ENCODE measurements at regions of chr9 and their contacts with region 1.

Region 1: GRCh38 chr9:111631071-111631971 is at the start of gene DNAJC25:
- DNase-seq: peak; percentile 96 to 99
- H3K4me3 ChIP-seq: peak within 1 kb of the TSS; percentile 81 to 92 (median 90)
- H3K27ac ChIP-seq: peak within 1 kb of the TSS; percentile 49; the same call in 1 of the 2 replicates
- H3K4me1 ChIP-seq: peaks cover 0 to 3% (median 0%) of the 10 kb centered on the region in 4 experiments; a peak in 3 of 7 replicates
- H3K27me3 ChIP-seq: no peaks in the 10 kb centered on the region
- CTCF ChIP-seq: 0 out of 4 replicates have a peak, but pooled peaks of 1 of the 3 experiments have one; percentile 1
- EP300 ChIP-seq: no peak
- POLR2A ChIP-seq: peak; percentile 100
- RAD21 ChIP-seq: no peak
- total RNA-seq, gene DNAJC25: 6.2 and 6.6 TPM in 2 replicates

Region 2: GRCh38 chr9:111582888-111583287 is 48.4 kb before region 1 on chr9:
- CTCF ChIA-PET with region 1: no interaction called
- POLR2A ChIA-PET with region 1: no interaction called
- DNase-seq: no peak
- H3K4me3 ChIP-seq: no peak overlapping the region
- H3K27ac ChIP-seq: no peak overlapping the region
- H3K4me1 ChIP-seq: no peaks in the 10 kb centered on the region
- H3K27me3 ChIP-seq: no peaks in the 10 kb centered on the region
- CTCF ChIP-seq: no peak
- EP300 ChIP-seq: no peak
- POLR2A ChIP-seq: no peak
- RAD21 ChIP-seq: no peak

Region 3: DNA sequence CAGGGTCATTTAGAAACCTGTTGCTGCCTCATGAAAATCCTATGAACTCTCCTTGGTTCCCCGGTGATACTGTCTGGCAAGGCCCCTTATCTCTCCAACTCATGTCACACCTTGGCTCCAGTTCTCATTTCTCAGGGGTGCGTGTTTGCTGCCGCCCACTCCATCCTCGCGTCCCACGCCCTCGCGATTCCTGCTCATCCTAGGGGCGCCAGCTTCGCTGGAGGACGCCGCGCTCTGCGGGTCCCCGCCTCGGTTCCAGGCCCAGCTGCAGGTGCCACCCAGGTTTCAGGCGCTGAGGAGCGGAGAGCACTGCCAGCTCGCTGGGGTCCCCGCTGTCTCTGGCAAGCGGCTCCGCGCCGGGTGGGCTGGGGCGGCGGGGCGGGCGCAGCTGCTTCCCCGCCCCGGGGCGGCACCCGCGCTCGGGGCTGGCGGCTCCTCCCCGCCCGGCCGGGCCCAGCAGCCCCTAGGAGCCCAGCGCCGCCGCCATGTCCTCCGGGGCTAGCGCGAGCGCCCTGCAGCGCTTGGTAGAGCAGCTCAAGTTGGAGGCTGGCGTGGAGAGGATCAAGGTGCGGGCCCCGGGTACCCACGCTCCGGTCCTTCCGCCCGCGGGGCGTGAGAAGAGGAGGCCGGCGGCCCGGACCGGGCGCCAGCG is 30.0 kb after region 1 on chr9 and contains the start of gene GNG10:
- CTCF ChIA-PET with region 1: no interaction called
- POLR2A ChIA-PET with region 1: interaction called, 12 read pairs
- DNase-seq: peak in 1 of 2 experiments; percentile 73
- H3K4me3 ChIP-seq: peak within 1 kb of the TSS; percentile 69 to 73 (median 70)
- H3K27ac ChIP-seq: no peak within 1 kb of the TSS
- H3K4me1 ChIP-seq: peaks cover 3 to 11% (median 7%) of the 10 kb centered on the region in 4 experiments; a peak in 6 of 7 replicates
- H3K27me3 ChIP-seq: no peaks in the 10 kb centered on the region
- CTCF ChIP-seq: no peak
- EP300 ChIP-seq: no peak
- POLR2A ChIP-seq: no peak; a peak in 1 of 3 replicates
- RAD21 ChIP-seq: no peak
- total RNA-seq, gene GNG10: 28.5 and 30.5 TPM in 2 replicates

Region 4: GRCh38 chr9:111704503-111704902 is 73.2 kb after region 1 on chr9:
- CTCF ChIA-PET with region 1: no interaction called
- POLR2A ChIA-PET with region 1: no interaction called
- DNase-seq: no peak
- H3K4me3 ChIP-seq: no peak overlapping the region
- H3K27ac ChIP-seq: no peak overlapping the region
- H3K4me1 ChIP-seq: no peaks in the 10 kb centered on the region
- H3K27me3 ChIP-seq: no peaks in the 10 kb centered on the region
- CTCF ChIP-seq: no peak
- EP300 ChIP-seq: no peak
- POLR2A ChIP-seq: no peak
- RAD21 ChIP-seq: no peak

Region 5: GRCh38 chr9:111896353-111896958 is 265.1 kb after region 1 on chr9 and contains the start of gene UGCG:
- CTCF ChIA-PET with region 1: no interaction called
- POLR2A ChIA-PET with region 1: no interaction called
- DNase-seq: peak; percentile 60 to 91
- H3K4me3 ChIP-seq: peak within 1 kb of the TSS; percentile 79 to 98 (median 84)
- H3K27ac ChIP-seq: peak within 1 kb of the TSS; percentile 71; the same call in 1 of the 2 replicates
- H3K4me1 ChIP-seq: peaks cover 0 to 5% (median 0%) of the 10 kb centered on the region in 4 experiments; a peak in 3 of 7 replicates
- H3K27me3 ChIP-seq: no peaks in the 10 kb centered on the region
- CTCF ChIP-seq: no peak
- EP300 ChIP-seq: no peak
- POLR2A ChIP-seq: peak; percentile 65 to 94
- RAD21 ChIP-seq: no peak
- total RNA-seq, gene UGCG: 31.4 and 34.0 TPM in 2 replicates

Measured in H1 (cell line).